Activated B cell treated with CpG ODN at 0.5 μM for 24 hours (primary cell): ENCODE measurements at regions of chr14 and their contacts with region 1.

Region 1: DNA sequence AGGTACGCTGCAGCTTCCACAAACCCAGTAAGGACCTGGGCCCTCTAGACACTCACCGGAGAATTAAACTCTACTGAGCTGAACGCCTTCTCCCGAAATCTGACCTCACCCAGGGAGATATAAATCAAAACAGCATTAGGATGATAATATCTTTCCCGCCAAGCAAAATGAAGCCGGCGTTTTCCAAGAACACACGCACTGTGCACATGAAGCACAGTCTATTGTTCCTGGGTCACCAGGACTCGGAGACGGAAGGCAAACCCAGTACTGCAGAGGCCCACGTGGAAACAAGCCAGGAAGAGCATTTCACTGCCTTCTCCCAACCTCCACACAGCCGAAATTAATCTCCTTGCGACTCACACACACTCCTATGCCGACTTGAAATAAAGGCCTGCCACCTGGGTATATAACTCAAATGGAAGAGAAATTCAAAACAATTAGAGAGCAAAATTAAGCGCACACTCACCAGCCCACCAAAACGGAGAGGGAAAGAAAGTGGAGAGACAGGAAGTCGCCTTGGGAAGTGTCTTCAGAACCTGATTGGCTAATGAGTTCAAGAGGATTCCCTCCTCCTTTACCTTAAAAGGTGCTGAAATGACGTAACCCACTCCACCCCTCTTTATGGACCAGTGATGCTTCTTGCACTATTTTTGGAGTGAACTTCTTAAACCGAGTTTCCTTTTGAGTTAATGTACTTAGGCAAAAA is at the start of gene CCNB1IP1:
- DNase-seq: no peak
- ATAC-seq: peak; percentile 97
- H3K4me3 Mint-ChIP-seq: peak within 1 kb of the TSS; percentile 99
- H3K27ac Mint-ChIP-seq: peak within 1 kb of the TSS; percentile 89
- H3K4me1 Mint-ChIP-seq: peaks cover 29% of the 10 kb centered on the region
- H3K27me3 Mint-ChIP-seq: no peaks in the 10 kb centered on the region
- CTCF ChIP-seq: no peak
- total RNA-seq, gene CCNB1IP1: 34.0 and 35.3 TPM in 2 replicates

Region 2: GRCh38 chr14:20461274-20462001 is 128.5 kb after region 1 on chr14 and contains the start of gene PIP4P1:
- CTCF ChIA-PET with region 1: no interaction called
- POLR2A ChIA-PET with region 1: interaction called, 3 read pairs
- intact Hi-C with region 1: loop called (anchors 2 kb)
- DNase-seq: peak; percentile 94
- ATAC-seq: peak; percentile 86
- H3K4me3 Mint-ChIP-seq: peak within 1 kb of the TSS; percentile 91
- H3K27ac Mint-ChIP-seq: peak within 1 kb of the TSS; percentile 96
- H3K4me1 Mint-ChIP-seq: peaks cover 55% of the 10 kb centered on the region
- H3K27me3 Mint-ChIP-seq: no peaks in the 10 kb centered on the region
- CTCF ChIP-seq: no peak
- total RNA-seq, gene PIP4P1: 84.8 and 87.3 TPM in 2 replicates